ENCODE measurements at regions of chr6 and their contacts with region 1.

Region 1: GRCh38 chr6:116287689-116288282 is 8.1 kb upstream of the TSPYL1 start:
- DNase-seq: no peak
- ATAC-seq: peak; percentile 93
- H3K4me3 Mint-ChIP-seq: no peak overlapping the region
- H3K27ac Mint-ChIP-seq: no peak overlapping the region
- H3K4me1 Mint-ChIP-seq: peaks cover 6% of the 10 kb centered on the region
- H3K27me3 Mint-ChIP-seq: no peaks in the 10 kb centered on the region
- CTCF ChIP-seq: peak; percentile 91

Region 2: DNA sequence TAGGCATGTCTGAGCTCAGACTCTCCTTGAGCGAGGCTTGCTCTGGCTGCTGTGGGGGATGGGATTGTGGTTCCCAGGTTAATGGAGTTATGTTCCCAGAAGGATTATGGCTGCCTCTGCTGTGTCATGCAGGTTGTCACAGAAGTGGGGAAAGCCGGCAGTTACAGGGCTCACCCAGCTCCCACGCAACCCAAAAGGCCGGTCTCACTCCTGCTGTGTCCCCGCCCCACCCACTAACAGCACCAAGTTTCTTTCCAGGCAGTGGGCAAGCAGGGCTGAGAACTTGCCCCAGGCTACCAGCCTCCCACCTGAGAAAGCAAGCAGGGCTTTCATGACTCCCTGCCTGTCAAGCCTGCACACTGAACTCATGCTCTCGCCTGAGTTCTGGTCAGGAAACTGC is 977.6 kb before region 1 on chr6:
- CTCF ChIA-PET with region 1: no interaction called
- POLR2A ChIA-PET with region 1: no interaction called
- DNase-seq: peak; percentile 15
- ATAC-seq: peak; percentile 62; the same call in 1 of the 2 replicates
- H3K4me3 Mint-ChIP-seq: no peak overlapping the region
- H3K27ac Mint-ChIP-seq: no peak overlapping the region
- H3K4me1 Mint-ChIP-seq: no peaks in the 10 kb centered on the region
- H3K27me3 Mint-ChIP-seq: peaks cover 3% of the 10 kb centered on the region; the same call in 1 of the 2 replicates
- CTCF ChIP-seq: no peak

Region 3: DNA sequence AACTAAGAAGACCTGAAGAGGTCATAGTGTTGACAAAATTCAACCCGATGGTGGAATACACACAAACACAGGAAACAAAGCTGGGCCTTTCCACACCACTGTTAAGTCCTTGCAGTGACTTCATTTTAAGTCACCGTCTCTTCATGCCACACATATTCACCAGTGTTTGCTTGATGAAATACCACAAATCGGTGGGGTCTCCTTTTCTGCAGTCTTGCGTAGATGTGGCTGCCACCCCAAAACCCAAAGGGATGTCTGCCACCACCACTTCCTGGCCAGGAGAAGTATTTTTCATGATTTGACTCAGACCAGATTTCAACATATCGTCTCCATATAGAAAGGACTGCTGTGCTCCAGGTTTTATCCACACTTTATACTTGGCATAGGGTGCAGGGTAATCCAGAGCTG is 150.8 kb before region 1 on chr6:
- CTCF ChIA-PET with region 1: no interaction called
- POLR2A ChIA-PET with region 1: no interaction called
- DNase-seq: no peak
- ATAC-seq: no peak
- H3K4me3 Mint-ChIP-seq: no peak overlapping the region
- H3K27ac Mint-ChIP-seq: 0 out of 2 replicates have a peak overlapping the region, but pooled peaks have one; percentile 71
- H3K4me1 Mint-ChIP-seq: peaks cover 21% of the 10 kb centered on the region
- H3K27me3 Mint-ChIP-seq: no peaks in the 10 kb centered on the region
- CTCF ChIP-seq: no peak

Region 4: GRCh38 chr6:116268589-116269293 is 19.0 kb before region 1 on chr6:
- CTCF ChIA-PET with region 1: interaction called, 46 read pairs
- POLR2A ChIA-PET with region 1: no interaction called
- DNase-seq: no peak
- ATAC-seq: peak; percentile 81
- H3K4me3 Mint-ChIP-seq: no peak overlapping the region
- H3K27ac Mint-ChIP-seq: peak overlapping the region; percentile 61; the same call in 1 of the 2 replicates
- H3K4me1 Mint-ChIP-seq: peaks cover 30% of the 10 kb centered on the region
- H3K27me3 Mint-ChIP-seq: no peaks in the 10 kb centered on the region
- CTCF ChIP-seq: peak; percentile 76

Region 5: DNA sequence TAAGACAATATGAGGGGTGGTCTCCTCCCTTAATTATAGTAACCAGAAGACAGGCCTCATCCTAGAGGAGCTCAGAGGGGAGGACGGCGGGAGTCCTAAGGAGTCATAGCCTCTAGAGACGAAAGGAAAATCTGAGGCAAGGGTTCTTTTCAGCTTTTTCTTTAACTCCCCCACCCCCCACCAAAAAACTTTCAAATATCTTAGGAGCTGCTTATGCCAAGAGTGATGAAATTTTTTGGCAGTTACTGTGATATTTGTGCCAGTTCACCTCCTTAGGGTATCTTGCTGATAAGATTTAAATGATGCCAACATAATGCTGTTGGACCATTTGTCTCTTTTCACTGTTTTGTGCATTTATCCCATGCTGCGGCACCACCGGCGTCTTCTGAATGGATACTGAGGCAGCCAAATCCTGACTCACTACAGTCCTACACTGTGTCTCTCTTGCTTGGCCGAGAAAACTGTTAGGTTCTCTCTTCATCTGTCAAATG is 38.4 kb after region 1 on chr6:
- CTCF ChIA-PET with region 1: interaction called, 24 read pairs
- POLR2A ChIA-PET with region 1: no interaction called
- DNase-seq: no peak
- ATAC-seq: no peak
- H3K4me3 Mint-ChIP-seq: no peak overlapping the region
- H3K27ac Mint-ChIP-seq: peak overlapping the region; percentile 90
- H3K4me1 Mint-ChIP-seq: peaks cover 80% of the 10 kb centered on the region
- H3K27me3 Mint-ChIP-seq: no peaks in the 10 kb centered on the region
- CTCF ChIP-seq: no peak

Region 6: DNA sequence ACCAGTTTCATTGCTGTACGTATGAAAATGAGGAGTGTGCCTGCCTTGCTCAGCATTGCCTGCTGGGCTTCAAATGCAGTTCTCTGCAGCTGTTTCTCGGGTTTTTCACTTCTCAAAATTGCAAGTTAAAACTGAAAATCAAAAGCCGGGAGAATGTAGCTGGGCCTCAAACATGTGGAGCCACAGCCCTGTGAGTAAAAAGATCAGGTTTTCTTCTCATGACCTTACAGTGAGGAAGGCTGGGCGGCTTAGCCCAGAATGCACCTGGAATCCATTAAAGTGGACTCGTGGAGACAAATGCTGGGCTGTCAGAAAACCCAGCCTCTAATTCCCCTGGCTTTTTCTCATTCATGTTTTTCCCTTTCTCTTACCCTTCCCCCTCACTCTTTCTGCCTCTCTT is 117.4 kb after region 1 on chr6:
- CTCF ChIA-PET with region 1: interaction called, 13 read pairs
- POLR2A ChIA-PET with region 1: no interaction called
- DNase-seq: no peak
- ATAC-seq: peak; percentile 45
- H3K4me3 Mint-ChIP-seq: peak overlapping the region; percentile 14
- H3K27ac Mint-ChIP-seq: peak overlapping the region; percentile 90
- H3K4me1 Mint-ChIP-seq: peaks cover 54% of the 10 kb centered on the region
- H3K27me3 Mint-ChIP-seq: no peaks in the 10 kb centered on the region
- CTCF ChIP-seq: no peak

Region 7: DNA sequence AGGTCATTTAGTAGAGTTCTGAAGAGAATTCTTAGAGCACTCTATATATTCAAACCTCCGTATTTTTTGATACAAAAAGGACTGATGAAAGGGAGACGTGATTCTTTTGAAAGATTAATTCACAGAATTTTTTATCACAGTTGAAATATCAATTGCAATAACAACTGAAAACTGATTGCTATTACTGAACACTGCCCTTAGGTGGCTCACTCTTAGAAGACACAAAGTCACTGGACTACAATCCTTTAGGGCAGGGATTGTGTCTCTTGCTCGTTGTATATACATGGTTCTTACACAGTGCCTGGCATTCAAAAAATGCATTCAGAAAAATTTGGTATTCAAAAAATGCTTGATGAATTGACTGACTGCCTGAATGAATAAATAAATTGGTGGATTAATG is 156.3 kb after region 1 on chr6:
- CTCF ChIA-PET with region 1: interaction called, 21 read pairs
- POLR2A ChIA-PET with region 1: no interaction called
- DNase-seq: no peak
- ATAC-seq: peak; percentile 62
- H3K4me3 Mint-ChIP-seq: no peak overlapping the region
- H3K27ac Mint-ChIP-seq: no peak overlapping the region
- H3K4me1 Mint-ChIP-seq: peaks cover 37% of the 10 kb centered on the region
- H3K27me3 Mint-ChIP-seq: no peaks in the 10 kb centered on the region; the same call in 1 of the 2 replicates
- CTCF ChIP-seq: no peak

Region 8: GRCh38 chr6:116556065-116556464 is 268.3 kb after region 1 on chr6:
- CTCF ChIA-PET with region 1: interaction called, 24 read pairs
- POLR2A ChIA-PET with region 1: no interaction called
- DNase-seq: no peak
- ATAC-seq: no peak
- H3K4me3 Mint-ChIP-seq: no peak overlapping the region
- H3K27ac Mint-ChIP-seq: no peak overlapping the region
- H3K4me1 Mint-ChIP-seq: peaks cover 1% of the 10 kb centered on the region
- H3K27me3 Mint-ChIP-seq: no peaks in the 10 kb centered on the region; the same call in 1 of the 2 replicates
- CTCF ChIP-seq: no peak